AG04449 (cell line): ENCODE measurements at regions of chr9 and their contacts with region 1.

Region 1: DNA sequence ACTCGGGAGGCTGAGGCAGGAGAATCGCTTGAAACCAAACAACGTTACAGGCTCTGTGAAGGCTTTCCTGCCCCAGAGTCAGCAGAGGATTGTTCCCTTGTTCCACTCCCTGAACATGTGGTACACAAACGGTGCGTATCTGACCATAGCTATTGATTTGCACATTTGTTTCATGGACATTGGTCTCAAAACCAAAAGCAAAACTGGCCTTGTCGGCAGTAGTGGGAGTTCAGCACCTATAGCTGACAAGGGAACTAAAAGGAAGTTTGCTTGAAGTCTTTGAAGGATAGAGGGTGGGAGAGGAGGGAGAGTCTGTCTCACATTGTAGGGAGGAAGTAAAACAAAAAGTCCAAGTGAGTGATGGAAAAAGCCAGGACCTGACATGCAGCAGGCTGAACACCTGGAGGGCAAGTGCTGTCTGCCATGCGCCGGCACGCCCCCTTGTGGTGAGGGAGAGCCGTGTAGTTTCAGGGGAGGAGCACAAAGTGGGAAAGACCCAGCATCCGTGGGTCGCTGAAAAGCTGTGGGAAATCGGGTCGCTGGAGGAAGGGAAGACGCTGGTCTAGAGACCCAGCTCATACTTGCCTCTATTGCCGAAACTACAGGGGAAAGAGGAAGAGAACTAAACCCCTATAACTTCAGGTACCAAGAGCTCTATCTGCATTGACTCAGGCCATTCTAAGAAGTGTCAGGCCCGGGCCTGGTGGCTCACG is 58.0 kb downstream of the RAD23B start:
- DNase-seq: no peak
- H3K4me3 ChIP-seq: no peak overlapping the region
- CTCF ChIP-seq: peak; percentile 96

Region 2: GRCh38 chr9:107158321-107158720 is 182.8 kb before region 1 on chr9:
- CTCF ChIA-PET with region 1: interaction called, 10 read pairs
- POLR2A ChIA-PET with region 1: no interaction called
- DNase-seq: no peak
- H3K4me3 ChIP-seq: no peak overlapping the region
- CTCF ChIP-seq: peak; percentile 57

Region 3: GRCh38 chr9:107172160-107172978 is 168.7 kb before region 1 on chr9:
- CTCF ChIA-PET with region 1: interaction called, 14 read pairs
- POLR2A ChIA-PET with region 1: no interaction called
- DNase-seq: peak; percentile 17
- H3K4me3 ChIP-seq: no peak overlapping the region
- CTCF ChIP-seq: peak; percentile 76

Region 4: GRCh38 chr9:107239474-107239873 is 101.6 kb before region 1 on chr9:
- CTCF ChIA-PET with region 1: interaction called, 32 read pairs
- POLR2A ChIA-PET with region 1: no interaction called
- DNase-seq: no peak
- H3K4me3 ChIP-seq: no peak overlapping the region
- CTCF ChIP-seq: no peak

Region 5: DNA sequence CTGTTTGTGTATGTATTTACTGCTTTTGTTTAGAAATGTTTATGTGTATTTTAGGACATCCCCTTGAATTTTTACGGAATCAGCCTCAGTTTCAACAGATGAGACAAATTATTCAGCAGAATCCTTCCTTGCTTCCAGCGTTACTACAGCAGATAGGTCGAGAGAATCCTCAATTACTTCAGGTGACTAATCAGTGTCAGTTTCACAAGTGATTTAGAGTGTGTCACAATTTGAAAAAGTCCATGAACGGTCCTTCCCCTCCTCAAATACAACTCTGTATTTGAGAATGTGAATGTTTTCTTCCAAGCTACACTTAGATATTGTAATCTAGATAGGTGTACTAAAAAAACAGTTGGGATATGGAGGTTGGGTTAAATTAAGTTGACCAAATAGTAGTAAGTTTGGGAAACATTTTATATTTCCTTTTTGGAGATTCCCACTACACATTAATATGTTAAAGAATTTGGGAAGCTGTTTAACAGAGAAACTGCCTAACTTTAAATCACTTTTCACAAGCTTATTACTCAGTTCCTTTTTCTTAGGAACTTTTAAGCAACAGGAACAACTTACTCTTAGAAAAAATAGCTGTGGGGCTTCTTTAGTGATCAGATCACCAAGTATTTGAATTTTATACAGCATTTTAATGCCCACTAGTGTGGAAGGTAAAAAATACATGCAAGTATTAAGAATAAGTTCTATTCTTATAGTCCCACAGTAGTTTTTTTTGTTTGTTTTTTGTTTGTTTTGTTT is 17.1 kb before region 1 on chr9:
- CTCF ChIA-PET with region 1: interaction called, 47 read pairs
- POLR2A ChIA-PET with region 1: no interaction called
- DNase-seq: no peak
- H3K4me3 ChIP-seq: no peak overlapping the region
- CTCF ChIP-seq: no peak

Region 6: GRCh38 chr9:107351382-107352045 is 10.4 kb after region 1 on chr9:
- CTCF ChIA-PET with region 1: interaction called, 14 read pairs
- POLR2A ChIA-PET with region 1: no interaction called
- DNase-seq: no peak
- H3K4me3 ChIP-seq: no peak overlapping the region
- CTCF ChIP-seq: no peak